ENCODE measurements at regions of chr3 and their contacts with region 1.

Region 1: DNA sequence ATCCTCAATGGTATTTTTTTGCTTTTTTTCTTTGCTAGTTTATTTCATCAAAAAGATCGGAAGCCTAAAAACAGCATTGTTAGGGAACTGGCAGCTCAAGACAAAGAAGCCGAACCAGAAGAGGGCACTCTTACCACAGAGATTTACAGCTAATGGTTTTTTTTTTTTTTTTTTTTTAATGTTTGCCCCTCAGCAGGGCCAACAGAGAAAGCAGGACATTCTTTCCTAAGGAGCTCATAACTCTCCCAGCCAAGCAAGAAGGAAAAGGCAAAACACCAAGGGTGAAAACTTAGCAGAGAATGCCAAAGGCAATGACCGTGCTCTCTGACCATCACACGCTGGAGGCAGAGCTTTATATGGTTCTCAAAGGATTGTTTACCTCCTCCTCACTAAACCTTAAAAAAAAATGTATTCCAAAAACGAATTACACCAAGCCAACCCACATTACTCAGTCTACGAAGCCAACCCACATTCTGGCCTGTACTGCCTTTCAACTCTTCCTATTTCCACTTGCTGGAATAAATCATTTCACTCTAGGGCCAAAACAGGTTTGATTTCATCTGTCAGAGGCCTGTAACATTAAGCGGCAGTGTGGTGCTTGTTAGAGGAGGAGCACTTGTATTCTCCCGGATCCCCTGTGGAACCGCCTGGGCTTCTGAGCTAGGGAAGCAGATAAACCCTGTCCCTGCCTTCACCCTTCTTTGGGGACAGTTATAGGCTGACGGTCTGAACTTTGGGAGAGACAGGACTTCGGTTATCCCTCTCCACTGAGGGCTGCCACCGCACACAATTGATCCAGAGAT is 35.6 kb upstream of the GYG1 start:
- DNase-seq: no peak
- ATAC-seq: peak; percentile 66
- H3K4me3 ChIP-seq: no peak overlapping the region
- H3K27ac ChIP-seq: no peak overlapping the region
- H3K4me1 ChIP-seq: no peaks in the 10 kb centered on the region
- H3K27me3 ChIP-seq: no peaks in the 10 kb centered on the region; a peak in 1 of 4 replicates
- CTCF ChIP-seq: peak; percentile 53 to 59 (median 57)
- EP300 ChIP-seq: no peak
- POLR2A ChIP-seq: no peak
- RAD21 ChIP-seq: peak; percentile 80

Region 2: DNA sequence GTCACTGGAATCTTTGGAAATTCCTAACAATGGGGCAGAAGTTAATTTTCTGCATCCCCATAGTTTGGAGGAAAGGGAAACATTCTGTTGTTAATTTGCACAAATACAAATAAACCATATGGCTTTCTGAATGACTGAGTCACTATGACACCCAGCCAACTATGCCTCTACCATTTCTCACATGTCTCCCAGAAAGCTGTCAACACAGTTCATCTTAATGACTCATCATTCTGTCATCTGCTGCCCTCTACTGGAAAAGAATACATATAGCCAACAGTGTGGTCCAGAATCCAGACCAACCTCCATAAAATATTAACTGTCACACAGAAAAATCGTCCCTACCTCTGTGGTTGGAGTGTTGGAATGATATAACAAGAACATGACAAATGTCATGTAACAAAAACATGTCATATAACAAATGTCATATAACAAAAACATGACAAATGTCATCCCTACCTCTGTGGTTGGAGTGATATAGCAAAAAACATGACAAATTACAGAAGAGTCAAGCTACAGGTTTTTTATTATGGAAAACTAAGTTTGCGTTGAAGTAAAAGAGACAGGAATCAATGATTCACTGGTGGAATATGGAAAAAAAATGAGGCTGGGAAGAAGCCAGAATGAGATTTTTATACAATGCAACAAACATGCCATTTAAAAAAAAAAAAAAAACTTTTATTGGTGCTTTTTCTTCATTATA is 12.1 kb before region 1 on chr3:
- CTCF ChIA-PET with region 1: interaction called, 31 read pairs
- POLR2A ChIA-PET with region 1: interaction called, 5 read pairs
- RAD21 ChIA-PET with region 1: interaction called, 5 read pairs
- SMC1A ChIA-PET with region 1: interaction called, 7 read pairs
- in situ Hi-C with region 1: no loop called
- intact Hi-C with region 1: no loop called
- DNase-seq: peak; percentile 19
- ATAC-seq: peak; percentile 97
- H3K4me3 ChIP-seq: no peak overlapping the region
- H3K27ac ChIP-seq: no peak overlapping the region
- H3K4me1 ChIP-seq: no peaks in the 10 kb centered on the region
- H3K27me3 ChIP-seq: peaks cover 0 to 3% of the 10 kb centered on the region in 2 experiments; a peak in 3 of 4 replicates
- CTCF ChIP-seq: peak; percentile 69 to 78 (median 75)
- EP300 ChIP-seq: no peak
- POLR2A ChIP-seq: no peak
- RAD21 ChIP-seq: peak; percentile 76

Region 3: DNA sequence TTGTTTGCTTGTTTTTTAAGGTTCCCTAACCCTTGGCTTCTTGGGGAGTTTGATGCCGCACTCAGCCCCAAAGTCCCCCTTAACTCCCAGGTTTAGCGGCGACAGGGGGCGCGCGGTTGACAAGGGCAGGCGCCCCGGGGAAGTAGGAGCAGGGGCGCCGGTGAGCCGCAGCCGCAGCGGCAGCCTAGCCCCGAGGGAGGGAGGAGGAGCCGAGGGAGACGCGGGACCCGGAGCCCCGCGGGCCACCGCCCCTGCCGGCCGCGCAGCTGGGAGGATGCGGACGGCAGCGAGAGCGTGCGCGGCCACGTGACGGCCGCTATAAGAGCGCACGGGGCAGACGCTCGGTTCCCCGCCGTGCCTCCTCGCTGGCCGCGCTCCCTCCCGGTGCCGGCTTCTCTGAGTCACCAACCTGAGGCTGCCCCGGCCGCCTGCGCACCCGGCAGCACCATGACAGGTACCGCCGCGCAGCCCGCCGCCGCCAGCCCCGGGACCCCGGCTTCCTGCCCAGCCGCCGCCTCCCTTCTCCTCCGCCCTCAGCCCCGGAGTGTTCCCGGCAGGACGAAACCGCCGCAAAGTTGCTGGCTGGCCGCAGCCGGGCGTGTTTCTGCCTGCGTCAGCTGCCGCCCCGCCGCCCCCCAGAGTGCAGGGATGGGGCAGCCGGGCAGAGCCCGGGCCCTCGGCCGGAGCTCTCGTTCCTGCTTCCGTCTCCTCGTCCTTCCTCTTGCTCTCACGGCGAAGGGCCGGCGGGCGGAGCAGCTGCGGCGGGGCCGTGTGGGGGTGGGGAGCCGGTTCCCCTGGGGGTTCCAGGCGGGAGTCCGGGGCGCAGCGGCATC is 35.7 kb after region 1 on chr3 and contains the start of gene GYG1:
- CTCF ChIA-PET with region 1: interaction called, 14 read pairs
- POLR2A ChIA-PET with region 1: no interaction called
- RAD21 ChIA-PET with region 1: no interaction called
- SMC1A ChIA-PET with region 1: interaction called, 5 read pairs
- in situ Hi-C with region 1: no loop called
- intact Hi-C with region 1: no loop called
- DNase-seq: no peak
- ATAC-seq: peak; percentile 94
- H3K4me3 ChIP-seq: peak within 1 kb of the TSS; percentile 94
- H3K27ac ChIP-seq: peak within 1 kb of the TSS; percentile 71
- H3K4me1 ChIP-seq: peaks cover 4% of the 10 kb centered on the region; the same call in 1 of the 2 replicates
- H3K27me3 ChIP-seq: no peaks in the 10 kb centered on the region
- CTCF ChIP-seq: peak in 2 of 3 experiments; percentile 23 to 49; a peak in 3 of 6 replicates
- EP300 ChIP-seq: no peak
- POLR2A ChIP-seq: peak; percentile 96
- RAD21 ChIP-seq: peak; percentile 28; the same call in 1 of the 2 replicates
- polyA plus RNA-seq, gene GYG1: 23.4 to 36.7 TPM

Region 4: DNA sequence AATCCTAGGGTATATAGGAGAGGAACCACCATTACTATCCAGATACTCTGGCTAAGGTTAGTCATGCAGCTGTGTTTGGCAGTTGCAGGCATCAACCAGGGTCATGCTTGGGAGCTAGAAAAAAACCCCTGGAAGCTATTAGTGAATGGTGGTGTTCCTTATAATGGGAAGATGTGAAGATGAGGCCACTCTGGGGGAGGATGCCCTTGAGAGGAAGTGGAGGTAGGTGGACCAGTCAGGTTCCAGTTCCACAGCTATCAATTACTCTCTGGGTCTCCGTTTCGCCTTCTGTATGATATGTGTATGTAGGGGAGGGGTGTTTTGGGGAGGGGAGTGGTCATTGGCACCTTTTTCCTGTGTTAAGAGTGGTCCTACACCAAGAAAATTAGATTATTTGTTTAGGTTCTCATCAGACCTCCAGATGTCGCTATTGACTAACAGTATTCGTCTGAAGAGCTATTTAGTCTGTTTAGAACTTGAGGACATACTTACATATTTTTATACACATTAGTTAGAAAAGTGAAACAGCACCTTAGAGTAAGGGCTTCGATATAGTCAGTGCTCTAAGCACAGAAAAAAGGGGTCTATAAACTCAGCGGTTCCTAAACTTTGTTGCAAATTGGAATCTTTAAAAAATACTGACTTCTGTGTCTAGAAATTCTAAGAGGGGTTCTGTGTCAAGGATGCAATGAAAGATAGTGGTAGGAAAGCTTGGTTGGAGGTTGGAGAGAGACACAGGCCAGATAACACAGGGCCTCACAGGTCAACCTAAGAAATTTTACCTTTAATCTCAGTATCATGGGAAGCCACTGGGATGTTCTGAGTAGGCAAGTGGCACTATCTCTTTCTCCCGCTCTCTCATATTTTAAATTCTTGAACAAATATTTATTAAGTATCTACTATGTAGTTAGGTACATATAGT is 164.6 kb after region 1 on chr3:
- CTCF ChIA-PET with region 1: interaction called, 81 read pairs
- POLR2A ChIA-PET with region 1: interaction called, 4 read pairs
- RAD21 ChIA-PET with region 1: interaction called, 29 read pairs
- SMC1A ChIA-PET with region 1: interaction called, 38 read pairs
- in situ Hi-C with region 1: no loop called
- intact Hi-C with region 1: loop called (anchors 1 kb)
- DNase-seq: peak; percentile 45
- ATAC-seq: peak; percentile 94
- H3K4me3 ChIP-seq: no peak overlapping the region
- H3K27ac ChIP-seq: no peak overlapping the region
- H3K4me1 ChIP-seq: no peaks in the 10 kb centered on the region
- H3K27me3 ChIP-seq: no peaks in the 10 kb centered on the region; a peak in 1 of 4 replicates
- CTCF ChIP-seq: peak; percentile 53 to 73 (median 55); a peak in 5 of 6 replicates
- EP300 ChIP-seq: no peak
- POLR2A ChIP-seq: no peak
- RAD21 ChIP-seq: peak; percentile 94

Region 5: GRCh38 chr3:149273096-149273751 is 317.5 kb after region 1 on chr3:
- CTCF ChIA-PET with region 1: interaction called, 75 read pairs
- POLR2A ChIA-PET with region 1: no interaction called
- RAD21 ChIA-PET with region 1: interaction called, 38 read pairs
- SMC1A ChIA-PET with region 1: interaction called, 18 read pairs
- in situ Hi-C with region 1: loop called (anchors 5 kb)
- intact Hi-C with region 1: loop called (anchors 1 kb)
- DNase-seq: peak; percentile 45
- ATAC-seq: peak; percentile 91
- H3K4me3 ChIP-seq: no peak overlapping the region
- H3K27ac ChIP-seq: no peak overlapping the region
- H3K4me1 ChIP-seq: peaks cover 4% of the 10 kb centered on the region; the same call in 1 of the 2 replicates
- H3K27me3 ChIP-seq: no peaks in the 10 kb centered on the region
- CTCF ChIP-seq: peak; percentile 82 to 100 (median 97); a peak in 5 of 6 replicates
- EP300 ChIP-seq: no peak
- POLR2A ChIP-seq: no peak
- RAD21 ChIP-seq: peak; percentile 100

Region 6: DNA sequence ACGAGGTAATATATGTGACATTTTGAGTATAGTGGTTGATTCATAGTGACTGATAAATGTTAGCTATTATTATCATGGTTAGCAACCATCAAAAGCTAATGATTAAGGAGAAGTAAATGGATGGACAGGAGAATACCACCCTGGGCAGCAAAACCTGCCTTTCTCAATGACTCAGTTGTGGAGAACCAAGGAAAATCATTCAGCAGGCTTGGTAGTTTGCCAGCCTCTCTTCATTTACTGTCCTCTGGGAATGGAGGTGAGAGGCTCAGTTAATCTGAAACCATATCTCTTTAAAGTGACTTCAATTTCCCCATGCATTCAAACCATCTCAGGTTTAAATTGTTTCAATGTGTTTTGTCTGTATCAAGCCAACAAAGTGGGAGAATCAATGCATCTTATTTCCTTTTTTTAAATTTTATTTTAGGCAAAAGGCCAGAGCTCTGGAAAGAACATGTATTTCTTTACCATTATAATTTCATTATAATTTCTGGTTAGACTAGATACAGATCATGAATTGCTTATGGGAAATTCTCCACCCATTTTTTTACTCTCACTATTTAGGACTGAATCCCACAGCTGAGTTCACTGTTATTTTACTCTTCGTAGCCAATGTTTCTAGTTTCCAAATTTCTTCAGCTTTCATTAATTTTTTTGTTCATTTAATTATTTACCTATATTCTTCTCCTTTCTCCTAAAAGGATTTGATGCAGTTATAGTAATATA is 375.0 kb after region 1 on chr3:
- CTCF ChIA-PET with region 1: no interaction called
- POLR2A ChIA-PET with region 1: no interaction called
- RAD21 ChIA-PET with region 1: no interaction called
- SMC1A ChIA-PET with region 1: interaction called, 4 read pairs
- in situ Hi-C with region 1: no loop called
- intact Hi-C with region 1: loop called (anchors 5 kb)
- DNase-seq: no peak
- ATAC-seq: no peak
- H3K4me3 ChIP-seq: no peak overlapping the region
- H3K27ac ChIP-seq: no peak overlapping the region
- H3K4me1 ChIP-seq: no peaks in the 10 kb centered on the region
- H3K27me3 ChIP-seq: no peaks in the 10 kb centered on the region; a peak in 2 of 4 replicates
- CTCF ChIP-seq: no peak
- EP300 ChIP-seq: no peak
- POLR2A ChIP-seq: no peak
- RAD21 ChIP-seq: no peak

Measured in GM12878 (cell line).